Ascending aorta (tissue), 2 donors: ENCODE measurements at regions of chr12 and their contacts with region 1.

Region 1: DNA sequence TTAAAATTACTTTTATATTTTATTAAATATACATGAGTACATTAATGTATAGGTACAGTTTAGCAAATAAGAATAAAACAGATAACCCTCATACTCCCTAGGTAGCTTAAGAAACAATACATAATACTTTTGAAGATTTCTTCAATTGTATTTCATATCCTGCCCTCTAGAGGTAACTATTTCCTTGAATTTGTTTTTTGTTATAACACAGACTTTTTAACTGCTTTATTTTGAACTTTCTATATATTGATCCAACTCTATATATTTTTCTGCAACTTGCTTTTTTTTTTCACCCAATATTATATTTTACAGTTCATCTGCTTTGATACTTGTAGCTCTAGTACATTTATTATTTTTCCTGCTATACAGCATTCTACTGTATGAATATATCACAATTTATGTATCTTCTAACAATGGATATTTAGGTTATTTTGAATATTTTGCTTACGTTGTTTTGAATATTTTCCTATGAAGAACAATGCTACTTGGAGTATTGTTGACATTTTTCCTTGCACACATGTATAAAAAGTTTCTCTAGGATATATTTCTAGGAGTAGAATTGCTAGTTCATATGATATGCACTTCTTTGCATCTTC is 72.8 kb upstream of the ABCD2 start:
- DNase-seq: no peak
- H3K4me3 ChIP-seq: no peak overlapping the region
- H3K27ac ChIP-seq: no peak overlapping the region
- H3K4me1 ChIP-seq: no peaks in the 10 kb centered on the region
- H3K27me3 ChIP-seq: no peaks in the 10 kb centered on the region
- CTCF ChIP-seq: no peak

Region 2: GRCh38 chr12:39300799-39301198 is 391.6 kb before region 1 on chr12:
- intact Hi-C with region 1: no loop called
- DNase-seq: no peak
- H3K4me3 ChIP-seq: no peak overlapping the region
- H3K27ac ChIP-seq: no peak overlapping the region
- H3K4me1 ChIP-seq: no peaks in the 10 kb centered on the region
- H3K27me3 ChIP-seq: no peaks in the 10 kb centered on the region
- CTCF ChIP-seq: no peak

Region 3: DNA sequence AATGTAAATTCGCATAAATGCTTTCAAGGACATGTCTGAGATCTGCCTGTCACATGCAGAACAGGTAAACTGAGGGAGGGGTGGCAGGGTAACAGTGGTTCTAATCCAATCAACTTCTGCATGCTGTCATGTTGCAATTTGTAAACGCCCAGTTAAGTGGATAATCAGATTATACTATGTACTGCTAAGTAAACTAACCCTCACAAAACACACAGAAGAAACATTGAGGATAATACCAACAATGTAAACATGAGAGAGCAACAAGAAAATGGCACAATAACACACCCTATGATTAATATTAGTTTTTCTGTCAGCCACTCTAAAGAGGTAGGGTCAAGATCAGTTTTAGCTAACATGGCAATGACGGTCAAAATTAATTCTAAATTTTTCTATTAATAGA is 373.2 kb before region 1 on chr12:
- intact Hi-C with region 1: loop called (anchors 5 kb)
- DNase-seq: no peak
- H3K4me3 ChIP-seq: no peak overlapping the region
- H3K27ac ChIP-seq: no peak overlapping the region
- H3K4me1 ChIP-seq: no peaks in the 10 kb centered on the region
- H3K27me3 ChIP-seq: no peaks in the 10 kb centered on the region
- CTCF ChIP-seq: no peak

Region 4: DNA sequence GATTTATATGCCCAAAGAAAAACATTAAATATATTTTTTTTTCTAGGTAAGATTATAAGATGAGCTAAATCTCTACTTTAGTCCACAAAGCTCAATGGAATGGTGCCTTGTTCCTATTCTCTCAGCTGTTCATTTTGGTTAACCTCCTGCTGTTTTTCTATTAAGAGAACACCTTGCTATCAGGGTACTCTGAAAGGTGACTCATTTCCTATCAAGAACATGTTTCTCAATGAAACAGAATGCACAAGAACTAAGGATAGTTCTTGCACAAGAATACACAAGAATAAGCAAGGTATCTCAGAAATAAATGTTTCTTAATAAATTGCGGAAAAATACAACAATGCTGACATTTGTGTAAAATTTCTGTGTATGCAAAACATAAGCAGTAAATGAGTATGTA is 86.9 kb before region 1 on chr12:
- intact Hi-C with region 1: no loop called
- DNase-seq: no peak
- H3K4me3 ChIP-seq: no peak overlapping the region
- H3K27ac ChIP-seq: no peak overlapping the region
- H3K4me1 ChIP-seq: no peaks in the 10 kb centered on the region
- H3K27me3 ChIP-seq: no peaks in the 10 kb centered on the region
- CTCF ChIP-seq: no peak